ENCODE measurements at regions of chr16 and their contacts with region 1.

Region 1: GRCh38 chr16:75110637-75111513 is 5.7 kb downstream of the LDHD start:
- DNase-seq: peak; percentile 89
- ATAC-seq: peak; percentile 85
- H3K4me3 Mint-ChIP-seq: peak overlapping the region; percentile 25
- H3K27ac Mint-ChIP-seq: peak overlapping the region; percentile 67
- H3K4me1 Mint-ChIP-seq: peaks cover 58% of the 10 kb centered on the region
- H3K27me3 Mint-ChIP-seq: no peaks in the 10 kb centered on the region

Region 2: DNA sequence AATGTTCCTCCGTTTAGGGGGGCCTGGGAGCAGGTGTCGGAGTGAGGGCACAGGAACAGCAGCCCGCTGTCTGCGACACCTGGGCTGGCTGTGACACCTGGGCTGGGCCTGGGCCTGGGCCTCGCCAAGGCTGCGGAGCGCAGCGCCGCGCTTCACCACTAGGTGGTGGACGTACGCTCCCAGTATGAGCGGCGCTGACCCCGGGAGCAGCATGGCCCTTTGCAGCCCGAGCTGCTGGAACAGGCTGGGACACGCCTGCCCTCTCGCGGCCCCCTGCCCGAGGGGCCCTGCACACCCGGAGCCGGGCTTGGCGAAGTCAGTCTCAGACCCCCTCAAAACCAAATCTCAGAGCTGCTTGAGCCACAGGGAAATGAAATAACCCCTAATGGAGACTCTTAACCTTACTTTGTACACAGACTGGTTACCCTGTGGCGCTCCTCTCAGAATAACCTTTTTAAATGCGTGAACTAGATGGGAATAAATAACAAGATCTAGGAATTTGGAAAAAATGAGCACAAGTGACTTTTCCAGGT is 297.7 kb before region 1 on chr16:
- CTCF ChIA-PET with region 1: interaction called, 25 read pairs
- POLR2A ChIA-PET with region 1: interaction called, 3 read pairs
- DNase-seq: peak; percentile 75
- ATAC-seq: peak; percentile 100
- H3K4me3 Mint-ChIP-seq: no peak overlapping the region
- H3K27ac Mint-ChIP-seq: no peak overlapping the region
- H3K4me1 Mint-ChIP-seq: no peaks in the 10 kb centered on the region
- H3K27me3 Mint-ChIP-seq: peaks cover 7% of the 10 kb centered on the region

Region 3: GRCh38 chr16:74984535-74985296 is 126.2 kb before region 1 on chr16 and contains the start of gene WDR59:
- CTCF ChIA-PET with region 1: interaction called, 21 read pairs
- POLR2A ChIA-PET with region 1: interaction called, 3 read pairs
- DNase-seq: peak; percentile 100
- ATAC-seq: peak; percentile 100
- H3K4me3 Mint-ChIP-seq: peak within 1 kb of the TSS; percentile 90
- H3K27ac Mint-ChIP-seq: peak within 1 kb of the TSS; percentile 93
- H3K4me1 Mint-ChIP-seq: peaks cover 21% of the 10 kb centered on the region
- H3K27me3 Mint-ChIP-seq: no peaks in the 10 kb centered on the region
- total RNA-seq, gene WDR59: 58.3 to 63.5 TPM

Region 4: DNA sequence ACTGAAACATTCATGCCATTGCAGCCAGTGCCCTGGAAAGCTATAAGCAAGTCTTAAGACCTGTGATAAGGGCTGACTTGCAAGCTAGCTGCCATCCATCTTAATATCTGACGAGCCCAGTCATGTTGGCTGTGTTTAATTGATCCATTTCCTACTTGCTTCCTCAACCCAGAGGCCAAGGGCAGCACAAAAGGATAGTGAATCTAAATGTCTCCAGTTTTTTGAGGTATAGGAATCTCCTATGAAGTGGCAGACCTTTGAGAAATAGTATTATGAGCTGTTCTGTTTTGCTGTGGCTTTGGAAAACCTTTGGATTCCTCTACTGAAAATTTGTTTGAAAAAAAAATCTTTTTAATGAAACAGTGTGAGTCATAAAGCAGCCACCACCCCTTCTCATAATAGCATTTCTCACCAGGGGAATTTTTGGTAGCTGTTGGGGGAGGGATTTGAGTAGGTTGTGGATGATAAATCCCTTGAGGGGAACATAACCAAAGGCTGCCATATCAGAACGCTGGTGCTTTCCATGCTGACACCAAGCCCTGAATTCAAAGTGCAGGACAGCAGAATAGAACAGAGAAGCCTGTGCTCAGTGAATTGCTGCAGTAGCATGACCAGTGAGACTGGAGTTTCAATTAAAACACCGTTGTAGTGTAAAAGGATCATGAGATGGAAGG is 99.1 kb before region 1 on chr16:
- CTCF ChIA-PET with region 1: interaction called, 40 read pairs
- POLR2A ChIA-PET with region 1: no interaction called
- DNase-seq: no peak
- ATAC-seq: peak; percentile 33
- H3K4me3 Mint-ChIP-seq: no peak overlapping the region
- H3K27ac Mint-ChIP-seq: no peak overlapping the region
- H3K4me1 Mint-ChIP-seq: peaks cover 19% of the 10 kb centered on the region
- H3K27me3 Mint-ChIP-seq: peaks cover 4% of the 10 kb centered on the region

Region 5: DNA sequence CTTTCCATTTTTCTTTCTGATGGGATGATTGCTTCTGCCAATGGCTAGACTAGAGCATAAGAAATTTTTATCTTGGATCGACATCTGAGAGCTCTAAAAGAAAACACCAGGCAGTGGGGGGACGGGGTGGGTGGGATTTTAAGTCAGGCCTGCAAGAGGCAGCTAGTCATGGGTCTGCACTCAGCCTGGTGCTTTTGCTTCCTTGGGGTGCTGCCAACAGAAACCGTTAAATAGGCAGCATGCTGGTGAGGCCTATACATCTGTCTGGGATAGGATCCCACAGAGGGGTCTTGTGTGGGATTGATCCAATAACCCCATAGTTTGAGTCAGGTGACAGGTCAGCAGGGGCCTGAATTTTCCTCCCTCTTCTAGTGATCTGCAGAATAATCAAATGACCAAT is 85.1 kb before region 1 on chr16:
- CTCF ChIA-PET with region 1: no interaction called
- POLR2A ChIA-PET with region 1: no interaction called
- DNase-seq: no peak
- ATAC-seq: no peak
- H3K4me3 Mint-ChIP-seq: no peak overlapping the region
- H3K27ac Mint-ChIP-seq: no peak overlapping the region
- H3K4me1 Mint-ChIP-seq: peaks cover 9% of the 10 kb centered on the region
- H3K27me3 Mint-ChIP-seq: no peaks in the 10 kb centered on the region

Region 6: GRCh38 chr16:75074920-75075687 is 35.8 kb before region 1 on chr16:
- CTCF ChIA-PET with region 1: interaction called, 29 read pairs
- POLR2A ChIA-PET with region 1: interaction called, 5 read pairs
- DNase-seq: peak; percentile 92
- ATAC-seq: peak; percentile 98
- H3K4me3 Mint-ChIP-seq: peak overlapping the region; percentile 32
- H3K27ac Mint-ChIP-seq: peak overlapping the region; percentile 87
- H3K4me1 Mint-ChIP-seq: peaks cover 46% of the 10 kb centered on the region
- H3K27me3 Mint-ChIP-seq: no peaks in the 10 kb centered on the region

Measured in activated CD8-positive, alpha-beta T cell treated with anti-CD3 and anti-CD28 coated beads, Interleukin-2, amount 10 ng/mL, durations not matched to agents 7 days and 5 days (primary cell).